SK-N-SH (cell line): ENCODE measurements at regions of chr9 and their contacts with region 1.

Region 1: DNA sequence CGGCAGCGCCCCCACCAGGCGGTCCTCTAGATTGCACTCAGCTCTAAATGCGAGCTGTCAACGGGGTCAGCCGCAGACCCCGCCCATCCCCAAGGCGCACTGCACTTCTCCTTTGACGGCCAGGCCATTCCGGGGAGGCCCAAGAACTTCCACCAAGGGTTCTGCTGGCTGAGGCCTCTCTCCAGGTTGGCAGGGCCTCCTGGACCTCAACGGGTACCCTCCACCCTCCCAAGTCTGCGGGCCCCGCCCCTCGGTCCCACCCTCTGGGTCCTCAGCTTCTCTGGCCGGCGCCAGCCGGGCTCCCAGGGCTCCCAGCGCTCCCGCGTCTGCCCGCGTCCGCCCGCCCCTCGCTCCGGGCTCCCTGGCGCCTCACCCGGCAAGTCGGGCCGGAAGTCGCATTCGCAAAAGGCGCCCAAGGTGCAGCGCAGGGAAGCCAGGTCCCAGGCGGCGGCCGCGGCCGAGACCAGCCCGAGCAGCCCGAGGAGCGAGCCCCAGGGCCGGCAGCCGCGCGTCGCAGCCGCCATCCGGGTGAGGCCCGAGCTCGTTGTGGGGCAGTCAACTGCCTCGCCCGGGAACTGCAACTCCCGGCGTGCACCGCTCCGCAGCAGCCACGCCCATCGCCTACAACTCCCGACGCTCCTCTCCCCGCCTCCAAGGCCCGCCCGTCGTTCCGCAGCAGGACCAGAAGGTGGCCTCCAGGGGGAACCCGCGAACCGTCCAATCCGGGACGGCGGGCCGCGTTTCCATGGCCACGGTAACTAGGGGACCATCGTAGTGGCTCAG is at the start of gene TOR2A:
- DNase-seq: peak; percentile 98
- H3K4me3 ChIP-seq: peak within 1 kb of the TSS; percentile 79
- H3K27ac ChIP-seq: peak within 1 kb of the TSS; percentile 62 to 93
- H3K4me1 ChIP-seq: peaks cover 5 to 11% of the 10 kb centered on the region in 2 experiments; a peak in 1 of 4 replicates
- H3K27me3 ChIP-seq: no peaks in the 10 kb centered on the region
- CTCF ChIP-seq: peak; percentile 95
- EP300 ChIP-seq: peak in 1 of 2 experiments; percentile 47; a peak in 1 of 4 replicates
- RAD21 ChIP-seq: peak; percentile 97
- polyA plus RNA-seq, gene TOR2A: 11.9 and 17.2 TPM in 2 replicates

Region 2: DNA sequence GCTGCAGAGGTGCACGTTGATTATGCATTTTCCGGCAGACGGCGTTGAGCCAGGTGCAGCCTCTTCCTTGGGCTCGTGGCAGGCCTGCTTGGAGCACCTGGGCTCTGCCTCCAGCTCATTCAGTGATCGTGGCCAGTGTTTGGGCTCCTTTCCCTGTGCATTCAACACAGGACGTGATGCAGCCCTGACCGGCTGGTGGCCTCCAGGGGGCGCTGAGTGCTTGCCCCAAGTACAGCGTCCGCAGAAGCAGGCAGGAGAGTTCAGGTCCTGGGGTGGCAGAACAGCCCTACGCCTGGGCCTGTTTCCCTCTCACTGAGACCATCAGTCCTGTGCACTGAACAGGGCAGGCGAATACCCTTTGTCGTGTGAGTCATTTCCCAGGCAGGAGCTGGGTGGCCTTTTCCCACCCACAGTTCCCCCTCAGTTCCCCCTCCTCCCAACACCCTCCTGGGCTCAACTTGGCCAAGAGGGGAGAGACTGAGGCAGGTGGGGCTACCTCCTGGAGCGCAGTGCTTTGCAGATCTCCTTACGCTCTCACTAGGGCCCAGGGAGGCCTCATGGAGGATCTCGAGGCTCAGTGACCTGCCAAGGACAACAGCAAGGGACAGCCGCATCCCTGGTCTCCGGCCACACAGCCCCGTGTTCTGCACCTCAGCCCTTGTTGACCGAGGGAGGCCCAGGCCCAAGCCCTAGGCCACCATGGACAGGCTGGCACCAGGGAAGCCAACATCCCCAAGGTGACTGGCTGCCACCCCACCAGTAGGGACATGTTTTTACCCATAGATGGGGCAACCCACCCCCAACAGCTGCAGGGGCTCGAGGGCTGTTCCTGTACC is 230.8 kb before region 1 on chr9:
- CTCF ChIA-PET with region 1: interaction called, 21 read pairs
- POLR2A ChIA-PET with region 1: no interaction called
- DNase-seq: peak; percentile 86
- H3K4me3 ChIP-seq: no peak overlapping the region; a peak in 1 of 4 replicates
- H3K27ac ChIP-seq: peak overlapping the region; percentile 4 to 59; a peak in 3 of 4 replicates
- H3K4me1 ChIP-seq: peaks cover 10 to 18% of the 10 kb centered on the region in 2 experiments; a peak in 2 of 4 replicates
- H3K27me3 ChIP-seq: no peaks in the 10 kb centered on the region
- CTCF ChIP-seq: peak; percentile 78
- EP300 ChIP-seq: no peak
- RAD21 ChIP-seq: peak; percentile 91

Region 3: DNA sequence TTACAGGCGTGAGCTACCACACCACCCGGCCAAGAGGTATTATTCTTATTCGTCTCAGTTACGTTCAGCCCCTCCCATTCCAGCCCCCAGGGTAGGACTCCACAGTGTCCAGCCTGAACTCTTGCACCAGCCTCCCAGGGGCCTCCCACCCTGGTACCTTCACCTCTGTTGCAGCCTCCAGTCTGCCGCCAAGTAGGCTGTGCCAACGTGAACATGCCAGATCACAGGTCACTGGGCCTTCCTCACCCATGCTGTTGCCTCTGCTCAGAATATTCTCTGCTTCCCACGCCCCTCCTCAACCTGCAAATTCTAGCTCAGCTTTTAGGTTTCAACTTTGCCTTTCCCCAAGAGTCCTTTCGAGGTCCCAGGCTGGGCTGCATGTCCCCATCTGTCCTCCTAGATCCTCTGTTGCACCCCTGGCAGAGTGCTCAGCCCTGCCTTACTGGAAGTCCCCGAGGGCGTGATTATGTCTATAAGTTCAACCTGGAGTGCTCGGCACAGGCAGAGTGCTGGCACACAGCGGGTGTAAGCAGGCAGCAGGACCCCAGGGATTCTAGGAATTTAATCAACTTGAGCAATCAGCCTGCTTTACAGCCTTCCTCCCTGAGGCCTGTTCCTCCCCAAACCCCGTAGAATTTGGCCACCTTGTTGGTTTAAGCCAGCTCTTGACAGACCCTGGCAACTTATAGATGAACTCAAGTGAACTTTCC is 135.9 kb before region 1 on chr9:
- CTCF ChIA-PET with region 1: interaction called, 45 read pairs
- POLR2A ChIA-PET with region 1: no interaction called
- DNase-seq: no peak
- H3K4me3 ChIP-seq: no peak overlapping the region
- H3K27ac ChIP-seq: no peak overlapping the region
- H3K4me1 ChIP-seq: peaks cover 0 to 8% of the 10 kb centered on the region in 2 experiments; a peak in 1 of 4 replicates
- H3K27me3 ChIP-seq: no peaks in the 10 kb centered on the region
- CTCF ChIP-seq: no peak
- EP300 ChIP-seq: no peak
- RAD21 ChIP-seq: no peak

Region 4: DNA sequence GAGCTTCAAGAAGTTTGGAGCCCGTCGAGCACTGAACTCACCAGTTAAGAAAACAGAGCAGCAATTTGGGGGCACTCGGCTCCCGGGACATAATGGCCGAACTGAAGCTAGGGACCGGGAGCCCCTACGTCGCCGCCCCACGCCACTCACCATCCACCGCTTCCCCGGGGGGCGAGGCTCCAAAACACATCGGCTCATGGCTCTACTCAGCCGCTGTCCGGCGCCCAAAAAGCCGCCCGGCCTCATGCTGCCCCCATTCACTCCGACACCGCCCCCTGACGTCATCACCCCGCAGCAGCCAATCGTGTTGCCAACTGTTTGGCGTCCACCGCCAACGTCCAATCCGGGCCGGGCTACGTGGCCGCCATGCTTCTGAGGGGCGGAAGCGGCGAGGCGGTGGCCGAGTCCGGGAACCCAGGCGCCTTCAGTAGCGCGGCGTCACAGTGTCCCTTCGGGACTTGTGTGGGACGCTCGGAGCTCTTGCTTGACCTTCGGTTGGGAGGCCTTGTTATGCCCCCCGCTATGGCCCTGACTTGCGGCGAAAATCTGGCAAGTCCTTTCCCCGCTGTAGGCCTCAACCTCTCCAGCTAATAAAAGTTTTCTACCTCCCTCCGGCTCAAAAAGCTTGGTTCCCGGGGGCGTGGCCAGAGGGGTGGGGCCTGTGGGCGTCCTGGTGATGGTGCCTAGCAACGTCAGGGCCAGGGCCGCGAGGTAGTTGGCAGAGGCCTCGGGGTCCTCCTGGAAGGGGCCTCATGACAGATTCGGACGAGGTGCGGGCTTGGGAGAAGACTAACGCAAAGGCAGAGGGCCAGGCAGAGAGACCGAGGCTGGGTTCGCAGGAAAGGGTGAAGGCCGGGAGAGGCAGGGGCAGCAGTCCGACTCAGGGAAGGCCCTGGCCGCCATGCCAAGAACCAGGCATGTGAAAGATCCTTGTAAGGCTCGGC is 19.3 kb before region 1 on chr9 and contains the starts of genes PTRH1 and TTC16:
- CTCF ChIA-PET with region 1: interaction called, 15 read pairs
- POLR2A ChIA-PET with region 1: interaction called, 3 read pairs
- DNase-seq: peak; percentile 99
- H3K4me3 ChIP-seq: peak within 1 kb of the TSS; percentile 94 to 98
- H3K27ac ChIP-seq: peak within 1 kb of the TSS; percentile 43 to 62
- H3K4me1 ChIP-seq: peaks cover 0 to 23% of the 10 kb centered on the region in 2 experiments; a peak in 1 of 4 replicates
- H3K27me3 ChIP-seq: no peaks in the 10 kb centered on the region
- CTCF ChIP-seq: no peak
- EP300 ChIP-seq: no peak
- RAD21 ChIP-seq: no peak
- polyA plus RNA-seq, gene PTRH1: 41.1 and 42.2 TPM in 2 replicates
- polyA plus RNA-seq, gene TTC16: 0.03 and 0.05 TPM in 2 replicates

Region 5: GRCh38 chr9:127770905-127771569 is 36.1 kb after region 1 on chr9:
- CTCF ChIA-PET with region 1: interaction called, 36 read pairs
- POLR2A ChIA-PET with region 1: no interaction called
- DNase-seq: peak; percentile 99
- H3K4me3 ChIP-seq: peak overlapping the region; percentile 46 to 61
- H3K27ac ChIP-seq: no peak overlapping the region
- H3K4me1 ChIP-seq: peaks cover 0 to 17% of the 10 kb centered on the region in 2 experiments; a peak in 1 of 4 replicates
- H3K27me3 ChIP-seq: no peaks in the 10 kb centered on the region
- CTCF ChIP-seq: no peak
- EP300 ChIP-seq: no peak
- RAD21 ChIP-seq: no peak

Region 6: GRCh38 chr9:127869310-127870152 is 134.6 kb after region 1 on chr9:
- CTCF ChIA-PET with region 1: interaction called, 63 read pairs
- POLR2A ChIA-PET with region 1: interaction called, 9 read pairs
- DNase-seq: peak; percentile 97
- H3K4me3 ChIP-seq: peak overlapping the region in 1 of 2 experiments; percentile 46; a peak in 1 of 4 replicates
- H3K27ac ChIP-seq: no peak overlapping the region
- H3K4me1 ChIP-seq: peaks cover 0 to 12% of the 10 kb centered on the region in 2 experiments; a peak in 1 of 4 replicates
- H3K27me3 ChIP-seq: no peaks in the 10 kb centered on the region
- CTCF ChIP-seq: peak; percentile 83
- EP300 ChIP-seq: no peak
- RAD21 ChIP-seq: peak; percentile 95

Region 7: GRCh38 chr9:127916665-127917613 is 182.0 kb after region 1 on chr9 and contains the start of gene ST6GALNAC4:
- CTCF ChIA-PET with region 1: interaction called, 41 read pairs
- POLR2A ChIA-PET with region 1: interaction called, 4 read pairs
- DNase-seq: peak; percentile 98
- H3K4me3 ChIP-seq: peak within 1 kb of the TSS; percentile 56 to 84
- H3K27ac ChIP-seq: peak within 1 kb of the TSS; percentile 58 to 95
- H3K4me1 ChIP-seq: peaks cover 20 to 35% of the 10 kb centered on the region in 2 experiments; a peak in 3 of 4 replicates
- H3K27me3 ChIP-seq: no peaks in the 10 kb centered on the region
- CTCF ChIP-seq: no peak
- EP300 ChIP-seq: no peak
- RAD21 ChIP-seq: no peak
- polyA plus RNA-seq, gene ST6GALNAC4: 28.4 and 30.2 TPM in 2 replicates

Region 8: GRCh38 chr9:128001779-128002298 is 266.9 kb after region 1 on chr9:
- CTCF ChIA-PET with region 1: no interaction called
- POLR2A ChIA-PET with region 1: no interaction called
- DNase-seq: peak; percentile 72
- H3K4me3 ChIP-seq: no peak overlapping the region
- H3K27ac ChIP-seq: peak overlapping the region; percentile 75 to 87
- H3K4me1 ChIP-seq: peaks cover 12 to 33% of the 10 kb centered on the region in 2 experiments
- H3K27me3 ChIP-seq: no peaks in the 10 kb centered on the region
- CTCF ChIP-seq: no peak
- EP300 ChIP-seq: peak; percentile 28 to 71; a peak in 2 of 4 replicates
- RAD21 ChIP-seq: no peak; the same call in 1 of the 2 replicates